ENCODE measurements at regions of chr11 and their contacts with region 1.

Region 1: GRCh38 chr11:35006389-35007128 is 90.1 kb downstream of the PDHX start:
- DNase-seq: peak; percentile 95
- ATAC-seq: peak; percentile 96
- H3K4me3 ChIP-seq: no peak overlapping the region
- H3K27ac ChIP-seq: peak overlapping the region; percentile 51
- H3K4me1 ChIP-seq: peaks cover 18% of the 10 kb centered on the region
- H3K27me3 ChIP-seq: no peaks in the 10 kb centered on the region
- CTCF ChIP-seq: no peak
- EP300 ChIP-seq: peak; percentile 83 to 94; a peak in 3 of 4 replicates
- POLR2A ChIP-seq: no peak
- RAD21 ChIP-seq: no peak; the same call in 1 of the 2 replicates

Region 2: DNA sequence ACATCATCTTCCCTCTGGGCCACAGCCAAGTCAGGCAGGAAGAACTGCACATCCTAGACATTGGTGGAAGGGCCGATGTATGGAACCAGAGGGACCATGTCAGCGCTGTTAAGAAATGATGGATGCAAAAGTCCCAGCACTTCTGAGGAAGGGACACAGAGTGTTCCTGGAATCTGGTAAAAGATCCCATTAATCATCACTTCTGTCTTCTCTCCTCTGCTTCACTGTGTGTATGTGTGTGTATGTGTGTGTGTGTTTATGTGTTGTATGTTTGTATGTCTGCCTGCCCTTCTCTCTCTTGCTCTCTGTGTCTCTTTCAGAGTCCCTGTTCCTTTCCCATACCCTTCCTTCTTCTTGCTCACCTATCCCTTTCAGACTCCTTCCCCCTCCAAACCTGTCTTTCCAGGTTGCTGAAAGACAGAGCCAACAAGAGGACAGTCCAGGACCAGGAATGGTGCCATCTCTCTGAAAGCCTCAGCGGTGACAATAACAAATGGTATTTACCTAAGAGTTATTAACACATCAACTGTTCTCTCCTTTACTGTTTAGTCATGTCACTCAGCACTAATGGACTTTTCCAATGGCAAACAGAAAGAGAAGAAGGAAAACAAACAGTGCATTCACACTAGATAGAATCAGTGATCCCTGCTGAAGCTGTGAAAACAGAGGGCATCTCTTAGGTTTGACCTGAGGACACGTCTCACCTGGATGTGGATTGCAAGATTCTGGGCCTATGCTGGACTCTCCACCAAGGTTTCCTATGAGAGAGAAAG is 338.6 kb before region 1 on chr11:
- CTCF ChIA-PET with region 1: no interaction called
- POLR2A ChIA-PET with region 1: no interaction called
- RAD21 ChIA-PET with region 1: no interaction called
- SMC1A ChIA-PET with region 1: no interaction called
- in situ Hi-C with region 1: no loop called
- intact Hi-C with region 1: no loop called
- DNase-seq: no peak
- ATAC-seq: no peak
- H3K4me3 ChIP-seq: no peak overlapping the region
- H3K27ac ChIP-seq: no peak overlapping the region
- H3K4me1 ChIP-seq: no peaks in the 10 kb centered on the region
- H3K27me3 ChIP-seq: peaks cover 0 to 3% of the 10 kb centered on the region in 2 experiments; a peak in 1 of 4 replicates
- CTCF ChIP-seq: no peak
- EP300 ChIP-seq: no peak
- POLR2A ChIP-seq: no peak
- RAD21 ChIP-seq: no peak

Region 3: GRCh38 chr11:34970480-34970879 is 36.1 kb before region 1 on chr11:
- CTCF ChIA-PET with region 1: no interaction called
- POLR2A ChIA-PET with region 1: no interaction called
- RAD21 ChIA-PET with region 1: no interaction called
- SMC1A ChIA-PET with region 1: no interaction called
- in situ Hi-C with region 1: no loop called
- intact Hi-C with region 1: no loop called
- DNase-seq: no peak
- ATAC-seq: no peak
- H3K4me3 ChIP-seq: no peak overlapping the region
- H3K27ac ChIP-seq: no peak overlapping the region
- H3K4me1 ChIP-seq: no peaks in the 10 kb centered on the region
- H3K27me3 ChIP-seq: no peaks in the 10 kb centered on the region
- CTCF ChIP-seq: no peak
- EP300 ChIP-seq: no peak
- POLR2A ChIP-seq: no peak
- RAD21 ChIP-seq: no peak

Region 4: DNA sequence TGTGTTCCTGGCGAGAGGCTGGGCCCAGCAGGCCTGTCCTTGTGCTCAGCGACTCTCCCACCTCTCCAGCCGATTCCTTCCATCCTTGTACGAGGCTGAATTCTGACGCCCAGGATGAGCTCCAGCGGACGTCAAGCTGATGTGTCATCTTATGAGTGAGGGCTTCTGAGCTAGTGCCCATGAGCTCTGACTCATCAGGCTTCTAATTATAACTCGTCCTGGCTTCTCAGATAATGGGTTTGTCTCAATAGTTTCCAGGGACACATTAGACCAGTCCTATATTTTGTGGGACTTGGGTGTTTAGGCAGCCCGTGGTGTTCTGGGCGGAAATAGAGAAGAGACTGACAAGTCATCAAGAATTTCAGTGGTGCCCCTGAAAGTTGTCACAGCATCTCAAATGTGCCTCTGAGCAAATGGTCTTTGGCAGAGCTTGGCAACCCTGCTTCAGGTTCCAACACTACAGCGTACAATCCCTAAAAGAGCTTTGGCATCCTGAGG is 24.2 kb after region 1 on chr11:
- CTCF ChIA-PET with region 1: interaction called, 5 read pairs
- POLR2A ChIA-PET with region 1: no interaction called
- RAD21 ChIA-PET with region 1: interaction called, 20 read pairs
- SMC1A ChIA-PET with region 1: interaction called, 41 read pairs
- in situ Hi-C with region 1: no loop called
- intact Hi-C with region 1: no loop called
- DNase-seq: no peak
- ATAC-seq: peak; percentile 62
- H3K4me3 ChIP-seq: no peak overlapping the region
- H3K27ac ChIP-seq: no peak overlapping the region
- H3K4me1 ChIP-seq: peaks cover 25% of the 10 kb centered on the region
- H3K27me3 ChIP-seq: no peaks in the 10 kb centered on the region
- CTCF ChIP-seq: no peak
- EP300 ChIP-seq: no peak
- POLR2A ChIP-seq: no peak
- RAD21 ChIP-seq: no peak

Region 5: DNA sequence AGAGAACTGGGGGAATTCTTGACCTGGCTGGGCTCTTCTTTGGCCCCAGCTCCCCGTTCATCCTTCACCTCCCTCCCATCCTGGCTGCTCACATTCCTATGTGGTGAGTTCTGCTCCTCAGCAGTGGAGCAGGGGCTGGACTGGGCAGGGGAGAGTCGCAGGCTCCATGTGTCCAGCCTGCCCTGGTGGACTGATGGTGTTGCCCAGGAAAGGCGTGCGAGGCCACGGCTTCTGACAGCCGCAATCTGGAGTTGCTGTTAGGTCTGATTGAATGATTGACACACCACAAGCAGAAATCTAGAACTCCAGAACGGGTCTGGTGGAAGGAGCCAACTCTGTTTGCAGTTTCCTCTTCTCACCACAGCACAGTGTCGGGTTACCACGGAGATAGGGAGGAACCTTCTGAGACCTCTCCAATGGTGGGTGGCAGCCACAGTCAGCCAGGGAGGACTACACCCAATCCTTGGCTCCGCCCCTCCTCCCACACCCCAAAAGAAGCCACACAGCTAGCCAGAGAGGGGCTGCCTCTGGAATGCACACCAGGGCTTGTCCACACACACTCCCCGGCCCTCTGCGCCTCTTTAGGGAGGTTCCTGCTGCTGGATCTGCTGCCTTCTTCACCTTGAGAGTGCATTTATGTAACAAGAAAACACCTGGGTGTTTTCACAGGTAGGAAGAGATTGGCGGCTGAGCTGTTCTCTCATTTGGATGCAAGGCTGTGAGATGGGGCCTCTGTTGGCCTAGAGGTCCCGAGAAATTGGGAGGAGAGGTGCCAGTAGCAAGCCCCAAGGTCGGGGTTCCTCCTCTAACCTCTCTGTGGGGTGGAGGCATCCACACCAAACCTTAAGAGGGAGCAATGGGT is 76.0 kb after region 1 on chr11:
- CTCF ChIA-PET with region 1: interaction called, 3 read pairs
- POLR2A ChIA-PET with region 1: no interaction called
- RAD21 ChIA-PET with region 1: interaction called, 9 read pairs
- SMC1A ChIA-PET with region 1: interaction called, 10 read pairs
- in situ Hi-C with region 1: loop called (anchors 5 kb)
- intact Hi-C with region 1: loop called (anchors 1 kb)
- DNase-seq: peak; percentile 83
- ATAC-seq: peak; percentile 85
- H3K4me3 ChIP-seq: peak overlapping the region; percentile 42; the same call in 1 of the 2 replicates
- H3K27ac ChIP-seq: peak overlapping the region; percentile 75
- H3K4me1 ChIP-seq: peaks cover 48% of the 10 kb centered on the region
- H3K27me3 ChIP-seq: no peaks in the 10 kb centered on the region
- CTCF ChIP-seq: no peak; a peak in 1 of 6 replicates
- EP300 ChIP-seq: peak; percentile 48 to 49; a peak in 1 of 4 replicates
- POLR2A ChIP-seq: peak; percentile 71
- RAD21 ChIP-seq: no peak

Region 6: DNA sequence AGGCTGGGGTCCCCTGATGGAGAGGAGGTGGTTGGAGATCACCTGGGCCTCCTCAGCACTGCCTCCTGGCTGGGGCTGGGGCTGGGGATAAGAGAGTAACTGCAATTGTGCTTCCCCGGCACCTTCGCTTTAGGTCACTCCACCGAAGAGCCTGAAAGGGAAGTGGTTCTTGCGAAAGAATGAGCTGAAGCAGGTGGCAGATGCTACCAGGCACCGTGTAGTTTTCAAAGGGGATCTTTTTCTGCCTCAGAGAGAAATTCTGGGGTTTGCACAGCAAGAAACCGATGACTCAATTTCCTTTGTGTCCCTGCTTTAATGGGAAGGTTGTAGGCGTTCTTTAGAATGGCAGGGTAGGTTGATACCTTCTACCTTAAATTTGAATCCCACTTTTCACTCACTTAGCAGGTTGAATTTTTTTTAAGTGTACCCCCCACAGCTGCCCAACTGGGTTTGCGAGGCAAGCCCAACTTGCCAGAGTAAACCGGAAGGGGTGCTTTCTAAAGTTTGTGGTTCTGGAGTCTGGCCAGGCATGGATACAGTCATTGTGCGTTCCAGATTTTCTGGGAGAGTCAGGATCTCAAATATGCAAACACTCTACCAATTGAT is 137.7 kb after region 1 on chr11:
- CTCF ChIA-PET with region 1: interaction called, 5 read pairs
- POLR2A ChIA-PET with region 1: interaction called, 4 read pairs
- RAD21 ChIA-PET with region 1: interaction called, 8 read pairs
- SMC1A ChIA-PET with region 1: interaction called, 47 read pairs
- in situ Hi-C with region 1: loop called (anchors 5 kb)
- intact Hi-C with region 1: loop called (anchors 2 kb)
- DNase-seq: peak; percentile 85
- ATAC-seq: peak; percentile 67
- H3K4me3 ChIP-seq: peak overlapping the region; percentile 56
- H3K27ac ChIP-seq: peak overlapping the region; percentile 54
- H3K4me1 ChIP-seq: peaks cover 55% of the 10 kb centered on the region
- H3K27me3 ChIP-seq: no peaks in the 10 kb centered on the region
- CTCF ChIP-seq: peak in 2 of 3 experiments; percentile 18 to 22; a peak in 2 of 6 replicates
- EP300 ChIP-seq: peak; percentile 64 to 77; a peak in 3 of 4 replicates
- POLR2A ChIP-seq: 0 out of 2 replicates have a peak, but pooled peaks have one; percentile 52
- RAD21 ChIP-seq: peak; percentile 41; the same call in 1 of the 2 replicates

Region 7: DNA sequence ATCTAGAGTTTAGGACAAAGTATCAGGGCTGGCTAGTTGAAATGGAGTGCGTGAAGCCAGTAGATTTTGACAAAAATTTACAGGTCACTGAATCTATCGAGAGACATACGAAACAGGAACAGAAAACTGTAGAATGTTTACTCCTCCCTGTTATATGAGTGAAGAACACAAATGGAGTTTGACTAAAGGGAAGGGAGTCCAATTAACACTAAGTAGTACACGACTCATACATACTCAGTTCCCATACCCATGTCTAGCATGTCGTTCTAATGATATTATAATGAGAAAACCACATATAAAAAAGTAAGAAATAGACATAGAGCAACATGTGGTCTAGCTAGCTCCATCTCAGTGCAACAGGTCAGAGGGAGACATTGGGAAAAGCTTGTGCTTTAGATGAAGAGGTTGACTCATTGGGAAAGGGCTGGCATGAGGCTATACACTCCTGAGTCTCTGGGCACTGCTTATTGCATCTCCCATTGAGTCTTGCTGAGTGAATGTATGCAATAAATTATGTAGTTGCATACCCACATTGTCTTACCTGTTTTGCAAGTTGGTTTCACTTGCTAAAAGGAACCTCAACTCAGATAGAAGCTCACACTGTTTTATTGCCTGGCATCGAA is 175.9 kb after region 1 on chr11:
- CTCF ChIA-PET with region 1: interaction called, 3 read pairs
- POLR2A ChIA-PET with region 1: no interaction called
- RAD21 ChIA-PET with region 1: interaction called, 8 read pairs
- SMC1A ChIA-PET with region 1: interaction called, 14 read pairs
- in situ Hi-C with region 1: no loop called
- intact Hi-C with region 1: no loop called
- DNase-seq: peak; percentile 52
- ATAC-seq: peak; percentile 93
- H3K4me3 ChIP-seq: no peak overlapping the region
- H3K27ac ChIP-seq: peak overlapping the region; percentile 51
- H3K4me1 ChIP-seq: peaks cover 19% of the 10 kb centered on the region
- H3K27me3 ChIP-seq: no peaks in the 10 kb centered on the region
- CTCF ChIP-seq: no peak
- EP300 ChIP-seq: no peak
- POLR2A ChIP-seq: no peak
- RAD21 ChIP-seq: no peak